Activated B cell treated with CpG ODN at 0.5 μM for 24 hours (primary cell): ENCODE measurements at regions of chr13 and their contacts with region 1.

Region 1: DNA sequence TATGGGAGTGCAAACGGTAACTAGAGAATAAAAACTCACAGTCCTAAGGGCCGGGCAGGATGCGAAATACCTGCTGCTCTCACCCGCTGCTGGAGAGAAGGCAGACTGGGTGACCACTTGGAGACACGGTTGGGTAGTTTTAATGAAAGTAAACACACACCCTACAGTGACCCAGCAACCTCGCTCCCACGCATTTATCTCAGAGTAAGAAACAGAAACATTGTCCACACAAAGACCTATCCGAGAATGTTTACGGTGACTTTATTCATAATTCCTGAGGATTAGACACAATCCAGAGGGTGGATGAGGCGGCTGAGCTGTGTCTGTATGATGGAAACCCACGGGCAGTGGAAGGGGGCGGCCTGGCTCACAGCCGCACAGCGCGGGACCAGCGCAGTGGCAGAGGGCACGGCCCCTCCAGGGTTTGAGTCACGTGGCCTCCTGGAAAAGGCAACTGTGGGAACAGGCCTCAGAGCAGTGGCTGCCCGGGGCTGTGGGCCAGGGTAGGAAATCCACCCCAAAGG is 73.5 kb upstream of the C13orf46 start:
- DNase-seq: no peak
- ATAC-seq: no peak
- H3K4me3 Mint-ChIP-seq: peak overlapping the region; percentile 58
- H3K27ac Mint-ChIP-seq: peak overlapping the region; percentile 74
- H3K4me1 Mint-ChIP-seq: peaks cover 78% of the 10 kb centered on the region
- H3K27me3 Mint-ChIP-seq: no peaks in the 10 kb centered on the region
- CTCF ChIP-seq: no peak

Region 2: DNA sequence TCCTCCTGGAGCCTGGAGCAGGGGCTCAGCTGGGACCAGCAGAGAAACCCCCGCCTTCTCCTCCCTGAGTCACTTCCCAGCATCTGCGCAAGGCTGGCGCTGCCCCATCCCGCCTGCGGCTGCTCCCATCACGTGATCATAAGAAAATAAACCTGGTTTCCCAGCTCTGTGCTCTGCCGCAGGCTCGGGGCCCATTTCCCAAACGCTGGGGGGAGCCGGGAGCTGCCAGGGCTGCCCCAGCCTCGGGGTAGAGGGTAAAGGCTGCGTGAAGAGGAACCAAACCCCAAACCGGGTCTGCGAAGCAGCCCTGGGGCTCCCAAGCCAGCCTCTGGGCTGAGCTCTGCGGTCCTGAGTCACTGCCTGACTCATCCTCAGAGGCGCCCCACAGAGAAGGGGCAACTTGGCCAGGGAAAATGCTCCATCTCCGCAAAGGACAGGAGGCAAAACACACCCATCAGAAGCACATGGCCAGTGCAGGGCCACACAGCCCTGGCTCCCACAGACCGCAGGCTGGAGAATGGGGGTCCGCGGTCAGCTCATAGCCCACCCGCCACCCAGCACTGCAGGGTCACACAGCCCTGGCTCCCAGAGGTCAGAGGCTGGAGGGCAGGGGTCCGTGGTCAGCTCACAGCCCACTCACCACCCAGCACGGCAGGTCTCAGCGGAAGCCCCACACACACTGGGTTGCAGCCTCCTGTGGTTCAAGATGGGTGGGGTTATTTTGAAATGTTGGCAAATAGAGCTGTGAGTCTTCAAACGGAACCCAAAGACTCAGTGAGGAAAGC is 17.9 kb after region 1 on chr13:
- CTCF ChIA-PET with region 1: no interaction called
- POLR2A ChIA-PET with region 1: interaction called, 25 read pairs
- intact Hi-C with region 1: loop called (anchors 1 kb)
- DNase-seq: peak; percentile 61
- ATAC-seq: peak; percentile 81
- H3K4me3 Mint-ChIP-seq: peak overlapping the region; percentile 82
- H3K27ac Mint-ChIP-seq: peak overlapping the region; percentile 91
- H3K4me1 Mint-ChIP-seq: peaks cover 68% of the 10 kb centered on the region
- H3K27me3 Mint-ChIP-seq: no peaks in the 10 kb centered on the region
- CTCF ChIP-seq: no peak